Activated CD4-positive, alpha-beta T cell treated with anti-CD3 and anti-CD28 coated beads, Interleukin-2, amount 10 ng/mL, durations not matched to agents 24 days and 14 days (primary cell): ENCODE measurements at regions of chr1 and their contacts with region 1.

Region 1: DNA sequence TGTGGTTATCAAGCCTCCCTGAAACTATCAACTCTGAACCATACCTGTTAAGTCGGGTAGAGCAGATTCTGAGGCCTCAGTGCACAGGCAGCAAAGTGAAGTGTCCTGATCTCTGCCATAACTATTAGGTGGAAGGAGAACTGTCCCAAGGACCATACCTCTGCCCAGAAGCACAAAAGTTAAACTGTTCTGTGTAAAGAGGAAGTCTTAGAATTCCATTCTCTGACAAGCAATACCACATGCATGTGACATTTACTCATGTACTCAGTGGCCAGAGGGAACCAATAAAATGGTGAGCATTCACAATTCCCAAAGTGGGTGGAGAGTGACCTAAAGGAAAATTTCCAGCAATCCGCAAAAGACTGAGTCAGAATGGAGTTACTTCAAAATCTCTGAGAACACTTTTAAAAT is 61.0 kb downstream of the TOR3A start:
- DNase-seq: no peak
- H3K4me3 Mint-ChIP-seq: peak overlapping the region; percentile 63
- H3K27ac Mint-ChIP-seq: peak overlapping the region; percentile 81
- H3K4me1 Mint-ChIP-seq: peaks cover 30% of the 10 kb centered on the region
- H3K27me3 Mint-ChIP-seq: no peaks in the 10 kb centered on the region

Region 2: GRCh38 chr1:178706432-178706831 is 436.5 kb before region 1 on chr1:
- intact Hi-C with region 1: no loop called
- DNase-seq: no peak
- H3K4me3 Mint-ChIP-seq: no peak overlapping the region
- H3K27ac Mint-ChIP-seq: no peak overlapping the region
- H3K4me1 Mint-ChIP-seq: no peaks in the 10 kb centered on the region
- H3K27me3 Mint-ChIP-seq: peaks cover 19% of the 10 kb centered on the region

Region 3: GRCh38 chr1:179229214-179230140 is 86.6 kb after region 1 on chr1 and contains the start of gene ABL2:
- intact Hi-C with region 1: loop called (anchors 1 kb)
- DNase-seq: peak; percentile 88
- H3K4me3 Mint-ChIP-seq: peak within 1 kb of the TSS; percentile 90
- H3K27ac Mint-ChIP-seq: peak within 1 kb of the TSS; percentile 89
- H3K4me1 Mint-ChIP-seq: peaks cover 24% of the 10 kb centered on the region
- H3K27me3 Mint-ChIP-seq: peaks cover 4% of the 10 kb centered on the region
- total RNA-seq, gene ABL2: 9.9 and 11.1 TPM in 2 replicates